WTC11 (cell line): ENCODE measurements at regions of chr17 and their contacts with region 1.

Region 1: DNA sequence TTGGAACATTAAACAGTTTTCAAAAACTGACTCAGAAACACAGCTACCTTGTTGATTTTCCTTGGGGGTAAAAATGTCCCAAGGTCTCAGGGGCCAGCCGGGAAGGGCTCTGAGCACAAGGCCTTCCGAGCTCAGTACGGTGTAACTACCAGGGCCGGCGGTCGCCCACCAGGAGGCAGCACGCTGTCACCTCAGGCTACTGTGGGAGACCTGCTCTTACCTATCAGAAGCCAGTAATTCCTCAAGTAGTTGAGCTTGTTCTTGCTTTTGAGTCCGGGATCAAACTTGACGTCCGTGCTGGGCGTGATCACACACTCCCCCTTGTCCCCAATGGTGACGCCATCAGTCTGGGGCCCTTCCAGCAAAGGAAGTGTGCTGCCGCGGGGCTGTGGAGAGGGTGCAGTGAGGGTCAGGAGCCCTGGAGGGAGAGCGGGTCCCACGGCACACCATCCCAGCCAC is 43.4 kb upstream of the ICAM2 start:
- DNase-seq: peak; percentile 84
- ATAC-seq: peak; percentile 99
- H3K4me3 Mint-ChIP-seq: peak overlapping the region; percentile 49
- H3K27ac Mint-ChIP-seq: peak overlapping the region; percentile 43; the same call in 1 of the 2 replicates
- H3K4me1 Mint-ChIP-seq: peaks cover 12% of the 10 kb centered on the region
- H3K27me3 Mint-ChIP-seq: peaks cover 4% of the 10 kb centered on the region; the same call in 1 of the 2 replicates
- CTCF ChIP-seq: peak; percentile 54; the same call in 1 of the 2 replicates

Region 2: GRCh38 chr17:64025732-64026294 is 38.0 kb before region 1 on chr17:
- CTCF ChIA-PET with region 1: interaction called, 81 read pairs
- POLR2A ChIA-PET with region 1: no interaction called
- DNase-seq: peak; percentile 92
- ATAC-seq: peak; percentile 97
- H3K4me3 Mint-ChIP-seq: peak overlapping the region; percentile 48
- H3K27ac Mint-ChIP-seq: no peak overlapping the region
- H3K4me1 Mint-ChIP-seq: peaks cover 3% of the 10 kb centered on the region; the same call in 1 of the 2 replicates
- H3K27me3 Mint-ChIP-seq: peaks cover 13% of the 10 kb centered on the region
- CTCF ChIP-seq: peak; percentile 96

Region 3: GRCh38 chr17:64073771-64074703 is 10.2 kb after region 1 on chr17:
- CTCF ChIA-PET with region 1: interaction called, 28 read pairs
- POLR2A ChIA-PET with region 1: no interaction called
- DNase-seq: no peak
- ATAC-seq: no peak
- H3K4me3 Mint-ChIP-seq: no peak overlapping the region
- H3K27ac Mint-ChIP-seq: no peak overlapping the region
- H3K4me1 Mint-ChIP-seq: no peaks in the 10 kb centered on the region
- H3K27me3 Mint-ChIP-seq: no peaks in the 10 kb centered on the region
- CTCF ChIP-seq: no peak

Region 4: DNA sequence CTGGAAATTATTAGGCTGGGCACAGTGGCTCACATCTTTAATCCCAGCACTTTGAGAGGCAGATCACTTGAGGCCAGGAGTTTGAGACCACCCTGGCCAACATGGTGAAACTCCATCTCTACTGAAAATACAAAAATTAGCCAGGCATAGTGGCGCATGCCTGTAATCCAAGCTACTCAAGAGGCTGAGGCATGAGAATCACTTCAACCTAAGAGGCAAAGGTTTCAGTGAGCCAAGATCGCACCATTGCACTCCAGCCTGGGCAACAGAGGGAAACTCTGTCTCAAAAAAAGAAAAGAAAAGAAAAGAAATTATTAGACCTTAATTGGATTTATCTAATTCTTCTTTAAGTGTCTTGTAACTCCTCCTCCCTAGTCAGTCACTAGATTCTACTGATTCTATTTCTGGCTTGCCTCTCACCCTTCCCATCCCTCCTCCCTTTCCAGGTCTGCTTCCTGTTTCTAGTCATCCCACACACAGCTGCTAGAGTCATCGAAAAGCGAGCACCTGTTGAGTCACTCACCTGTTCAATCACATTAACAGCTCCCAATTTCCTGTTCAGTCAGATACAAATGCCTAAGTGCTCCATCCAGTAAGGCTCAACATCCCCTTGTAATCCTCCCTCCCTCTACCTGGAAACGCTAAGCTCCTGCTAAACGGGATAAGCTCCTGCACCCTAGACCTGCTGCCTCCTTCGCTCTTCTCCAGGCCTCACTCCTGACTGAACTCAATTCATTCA is 31.5 kb after region 1 on chr17:
- CTCF ChIA-PET with region 1: interaction called, 17 read pairs
- POLR2A ChIA-PET with region 1: no interaction called
- DNase-seq: no peak
- ATAC-seq: peak; percentile 85
- H3K4me3 Mint-ChIP-seq: no peak overlapping the region
- H3K27ac Mint-ChIP-seq: peak overlapping the region; percentile 75
- H3K4me1 Mint-ChIP-seq: peaks cover 19% of the 10 kb centered on the region
- H3K27me3 Mint-ChIP-seq: no peaks in the 10 kb centered on the region
- CTCF ChIP-seq: no peak

Region 5: GRCh38 chr17:64129764-64130558 is 66.2 kb after region 1 on chr17 and contains the start of gene ERN1:
- CTCF ChIA-PET with region 1: interaction called, 364 read pairs
- POLR2A ChIA-PET with region 1: interaction called, 9 read pairs
- DNase-seq: peak; percentile 89
- ATAC-seq: peak; percentile 89
- H3K4me3 Mint-ChIP-seq: peak within 1 kb of the TSS; percentile 66
- H3K27ac Mint-ChIP-seq: no peak within 1 kb of the TSS
- H3K4me1 Mint-ChIP-seq: peaks cover 13% of the 10 kb centered on the region
- H3K27me3 Mint-ChIP-seq: peaks cover 37% of the 10 kb centered on the region
- CTCF ChIP-seq: no peak
- total RNA-seq, gene ERN1: 6.5 to 8.6 TPM (median 7.6 TPM) in 3 replicates

Region 6: GRCh38 chr17:64180089-64181073 is 116.6 kb after region 1 on chr17:
- CTCF ChIA-PET with region 1: no interaction called
- POLR2A ChIA-PET with region 1: no interaction called
- DNase-seq: no peak
- ATAC-seq: no peak
- H3K4me3 Mint-ChIP-seq: no peak overlapping the region
- H3K27ac Mint-ChIP-seq: no peak overlapping the region
- H3K4me1 Mint-ChIP-seq: no peaks in the 10 kb centered on the region
- H3K27me3 Mint-ChIP-seq: no peaks in the 10 kb centered on the region
- CTCF ChIP-seq: no peak

Region 7: DNA sequence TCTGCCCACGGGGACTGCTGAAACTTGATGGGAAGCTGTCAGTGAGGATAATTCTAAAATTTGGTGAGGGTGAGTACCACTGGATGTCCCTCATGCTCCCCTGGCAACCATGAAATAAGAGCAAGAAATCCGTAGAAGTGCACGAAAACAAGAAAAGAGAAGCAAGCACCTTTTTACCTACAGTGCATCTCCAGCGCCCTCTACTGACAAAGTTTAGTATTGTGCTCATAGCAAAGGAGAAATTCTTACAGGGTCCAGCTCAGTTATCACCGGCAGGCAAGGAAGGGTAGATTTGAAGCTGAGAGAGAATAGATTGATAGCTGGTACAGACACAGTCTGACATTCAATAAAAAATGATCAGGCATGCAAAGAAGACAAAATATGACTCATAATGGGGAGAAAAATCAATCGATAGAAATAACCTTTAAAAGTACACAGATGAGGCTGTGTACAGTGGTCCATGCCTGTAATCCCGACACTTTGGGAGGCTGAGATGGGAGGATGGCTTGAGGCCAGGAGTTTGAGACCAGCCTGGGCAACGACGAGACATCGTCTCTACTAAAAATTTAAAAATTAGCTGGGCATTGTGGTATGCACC is 227.6 kb after region 1 on chr17:
- CTCF ChIA-PET with region 1: interaction called, 12 read pairs
- POLR2A ChIA-PET with region 1: no interaction called
- DNase-seq: no peak
- ATAC-seq: peak; percentile 39; the same call in 1 of the 2 replicates
- H3K4me3 Mint-ChIP-seq: no peak overlapping the region
- H3K27ac Mint-ChIP-seq: no peak overlapping the region
- H3K4me1 Mint-ChIP-seq: no peaks in the 10 kb centered on the region
- H3K27me3 Mint-ChIP-seq: no peaks in the 10 kb centered on the region
- CTCF ChIP-seq: peak; percentile 49

Region 8: DNA sequence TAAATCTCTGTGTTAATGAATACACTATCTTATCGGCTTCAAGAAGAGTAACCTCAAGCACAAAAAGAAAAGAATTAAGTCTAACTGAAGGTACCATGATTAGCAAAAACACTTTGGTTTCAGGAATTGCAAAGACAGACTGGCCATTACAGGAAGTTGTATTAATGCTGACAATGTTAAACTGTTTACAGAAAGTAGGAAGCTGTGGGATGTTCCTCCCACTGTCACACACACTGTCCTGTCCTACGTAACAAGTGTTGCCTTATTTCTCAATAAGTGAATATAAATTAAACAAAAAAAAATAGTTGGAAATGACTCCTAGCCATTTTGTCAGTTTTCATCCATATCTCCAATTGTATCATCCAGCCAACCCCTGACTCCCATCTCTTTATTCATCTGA is 984.1 kb after region 1 on chr17:
- CTCF ChIA-PET with region 1: no interaction called
- POLR2A ChIA-PET with region 1: no interaction called
- DNase-seq: no peak
- ATAC-seq: no peak
- H3K4me3 Mint-ChIP-seq: no peak overlapping the region
- H3K27ac Mint-ChIP-seq: 0 out of 2 replicates have a peak overlapping the region, but pooled peaks have one; percentile 52
- H3K4me1 Mint-ChIP-seq: peaks cover 14% of the 10 kb centered on the region
- H3K27me3 Mint-ChIP-seq: no peaks in the 10 kb centered on the region
- CTCF ChIP-seq: no peak